Activated CD4-positive, alpha-beta memory T cell treated with anti-CD3 and anti-CD28 coated beads, Interleukin-2, amount 10 ng/mL, durations not matched to agents 7 days and 5 days (primary cell): ENCODE measurements at regions of chr10 and their contacts with region 1.

Region 1: DNA sequence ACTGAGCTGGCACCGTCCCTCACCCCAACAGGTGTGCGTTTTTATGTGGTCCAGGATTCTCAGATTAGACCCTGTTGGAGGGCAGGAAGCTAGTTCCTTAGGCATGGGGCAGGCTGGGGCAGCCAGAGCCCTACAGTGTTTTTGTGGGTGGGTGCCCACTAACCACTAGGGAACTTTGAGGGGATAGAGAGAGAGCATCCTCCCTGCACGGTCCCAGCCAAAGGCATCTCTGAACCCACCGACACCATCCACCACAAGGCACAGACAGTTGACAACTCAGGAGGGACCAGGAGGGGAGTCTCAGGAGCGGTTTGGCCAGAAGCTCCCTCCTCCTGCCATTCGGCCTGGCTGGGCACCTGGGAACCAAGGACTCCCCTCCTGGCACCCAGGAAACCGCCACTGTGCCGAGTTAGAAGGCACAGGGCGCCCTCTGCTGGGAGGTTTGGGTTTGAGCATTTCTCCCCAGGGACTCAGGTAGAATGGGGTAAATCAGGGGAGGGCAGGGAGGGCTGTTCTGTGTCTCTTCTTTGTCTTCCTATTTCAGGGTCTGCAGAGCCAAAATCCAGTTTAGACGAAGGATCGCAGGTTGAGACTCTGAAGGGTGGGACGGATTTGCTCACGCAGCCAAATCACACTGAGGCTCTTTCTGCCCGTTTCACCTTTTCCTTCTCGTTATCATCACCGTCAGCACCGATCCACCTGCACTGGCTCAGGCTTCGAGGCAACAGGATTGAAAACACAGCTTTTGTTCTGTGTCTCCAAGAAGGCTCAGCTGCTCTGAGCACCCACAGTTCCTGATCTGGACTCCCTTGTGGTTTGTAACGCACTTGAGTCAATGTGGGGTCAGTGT is 84.8 kb upstream of the COL13A1 start:
- DNase-seq: peak; percentile 65
- H3K4me3 Mint-ChIP-seq: no peak overlapping the region
- H3K27ac Mint-ChIP-seq: no peak overlapping the region
- H3K4me1 Mint-ChIP-seq: no peaks in the 10 kb centered on the region
- H3K27me3 Mint-ChIP-seq: peaks cover 12% of the 10 kb centered on the region

Region 2: DNA sequence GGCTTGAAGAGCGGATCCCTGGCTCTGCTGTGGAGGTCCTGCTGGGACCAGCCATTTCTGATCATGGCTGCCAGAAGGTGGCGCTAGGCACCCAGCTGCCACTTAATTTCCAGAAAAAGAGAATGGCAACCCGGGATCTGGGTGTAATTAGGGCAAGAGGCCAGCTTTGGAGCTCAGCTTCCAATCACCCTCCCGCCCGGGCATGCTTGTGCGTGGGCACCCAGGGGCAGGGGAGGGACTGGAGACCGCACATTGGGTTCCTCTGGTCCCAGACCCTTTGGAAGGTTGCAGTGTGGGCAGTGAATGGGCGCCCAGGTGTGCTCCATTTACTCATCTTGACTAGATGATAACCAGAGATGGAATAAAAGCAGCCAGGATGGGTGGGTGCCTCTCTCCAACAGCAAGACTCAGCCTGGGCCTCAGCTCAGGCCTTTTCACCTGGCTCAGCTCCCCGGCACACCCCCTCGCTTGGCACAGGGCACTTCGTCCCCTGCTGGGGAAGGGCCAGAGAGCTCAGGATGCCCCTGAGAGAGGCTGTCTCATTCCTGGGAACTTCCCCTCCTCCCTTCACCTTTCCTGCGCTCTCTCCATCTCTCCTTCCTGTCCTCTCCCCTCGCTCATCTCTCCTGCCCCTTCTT is 72.2 kb before region 1 on chr10:
- CTCF ChIA-PET with region 1: interaction called, 16 read pairs
- POLR2A ChIA-PET with region 1: no interaction called
- DNase-seq: peak; percentile 55
- H3K4me3 Mint-ChIP-seq: no peak overlapping the region
- H3K27ac Mint-ChIP-seq: no peak overlapping the region
- H3K4me1 Mint-ChIP-seq: peaks cover under 1% of the 10 kb centered on the region
- H3K27me3 Mint-ChIP-seq: no peaks in the 10 kb centered on the region

Region 3: DNA sequence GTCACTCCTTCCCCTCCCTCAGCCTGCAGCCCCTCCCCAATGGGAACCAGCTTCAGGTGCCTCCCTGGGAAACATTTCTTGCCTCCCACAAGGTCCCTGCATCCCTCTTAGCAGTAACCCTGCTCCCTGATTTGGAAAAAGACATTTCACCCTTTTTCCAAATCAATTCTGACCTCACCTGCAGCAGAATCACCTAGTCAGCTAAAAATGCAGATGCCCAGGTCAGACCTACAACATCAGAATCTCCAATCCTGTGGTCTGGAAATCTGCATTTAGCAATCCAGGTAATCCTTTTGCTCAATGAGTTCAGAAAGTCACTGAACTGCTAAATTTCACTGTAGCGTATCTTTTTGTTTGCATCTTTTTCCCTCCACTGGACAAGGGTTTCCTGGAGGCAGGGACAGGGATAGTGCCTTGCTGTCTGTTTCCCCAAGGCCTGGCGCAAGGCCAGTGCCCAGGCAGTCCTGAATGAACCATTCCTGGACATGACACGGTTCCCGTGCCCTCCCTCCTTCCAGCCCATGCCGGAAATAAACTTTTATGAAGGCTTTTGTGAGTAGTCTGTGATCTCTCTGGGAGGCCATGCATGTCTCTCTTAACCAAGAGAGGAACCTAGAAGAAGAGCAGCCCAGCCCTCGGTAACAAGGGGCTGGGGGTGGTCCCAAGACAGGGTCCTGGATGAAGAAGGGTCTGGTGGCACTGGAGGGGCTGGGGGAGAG is 128.8 kb after region 1 on chr10:
- CTCF ChIA-PET with region 1: no interaction called
- POLR2A ChIA-PET with region 1: no interaction called
- DNase-seq: no peak
- H3K4me3 Mint-ChIP-seq: no peak overlapping the region
- H3K27ac Mint-ChIP-seq: no peak overlapping the region
- H3K4me1 Mint-ChIP-seq: no peaks in the 10 kb centered on the region
- H3K27me3 Mint-ChIP-seq: peaks cover 28% of the 10 kb centered on the region